BJ (cell line): ENCODE measurements at regions of chr16 and their contacts with region 1.

Region 1: DNA sequence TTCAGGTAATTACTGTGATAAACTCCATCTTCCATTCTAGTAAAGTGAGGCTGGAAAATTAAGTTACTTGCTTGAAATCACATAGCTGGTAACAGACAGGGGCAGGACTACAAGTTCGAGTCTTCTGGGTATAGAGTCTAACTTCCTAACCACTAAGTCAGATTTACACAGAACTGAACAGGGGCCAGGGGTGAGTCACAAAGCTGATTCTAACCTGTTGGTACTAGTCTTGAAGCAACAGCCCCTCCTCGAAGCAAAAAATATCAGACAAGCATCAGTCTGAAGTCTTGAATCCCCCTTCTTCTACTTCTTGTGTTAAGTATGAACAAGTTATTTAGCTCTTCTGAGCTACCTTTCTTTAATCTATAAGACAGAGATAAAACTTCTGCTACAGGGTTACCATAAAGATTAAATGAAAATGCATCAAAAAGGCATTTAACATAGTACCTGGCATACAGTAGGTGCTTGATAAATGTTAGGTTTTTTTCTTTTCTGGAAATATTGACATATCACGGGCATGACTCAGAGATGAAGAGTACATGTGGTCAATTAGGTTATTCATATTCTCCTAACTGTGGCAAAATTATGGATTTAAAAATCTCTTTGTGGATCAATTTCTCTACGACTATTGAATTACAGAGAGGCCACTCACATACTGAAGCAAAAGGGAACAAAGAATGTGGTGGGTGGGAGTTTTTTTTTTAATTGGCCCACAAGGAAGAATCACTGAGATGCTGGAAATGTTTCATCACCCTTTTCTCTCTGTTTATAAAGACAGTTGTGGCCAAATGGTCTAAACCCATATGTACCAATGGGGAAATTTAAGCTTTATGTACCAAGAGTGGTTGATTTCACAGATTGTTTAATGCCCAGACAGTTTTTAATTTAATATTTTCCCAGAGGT is 266.9 kb upstream of the DYNLRB2 start:
- DNase-seq: peak; percentile 39
- H3K4me3 ChIP-seq: no peak overlapping the region
- H3K27me3 ChIP-seq: no peaks in the 10 kb centered on the region
- CTCF ChIP-seq: no peak

Region 2: GRCh38 chr16:80250376-80250775 is 23.5 kb before region 1 on chr16:
- CTCF ChIA-PET with region 1: interaction called, 3 read pairs
- POLR2A ChIA-PET with region 1: interaction called, 31 read pairs
- DNase-seq: no peak
- H3K4me3 ChIP-seq: no peak overlapping the region
- H3K27me3 ChIP-seq: no peaks in the 10 kb centered on the region
- CTCF ChIP-seq: no peak

Region 3: DNA sequence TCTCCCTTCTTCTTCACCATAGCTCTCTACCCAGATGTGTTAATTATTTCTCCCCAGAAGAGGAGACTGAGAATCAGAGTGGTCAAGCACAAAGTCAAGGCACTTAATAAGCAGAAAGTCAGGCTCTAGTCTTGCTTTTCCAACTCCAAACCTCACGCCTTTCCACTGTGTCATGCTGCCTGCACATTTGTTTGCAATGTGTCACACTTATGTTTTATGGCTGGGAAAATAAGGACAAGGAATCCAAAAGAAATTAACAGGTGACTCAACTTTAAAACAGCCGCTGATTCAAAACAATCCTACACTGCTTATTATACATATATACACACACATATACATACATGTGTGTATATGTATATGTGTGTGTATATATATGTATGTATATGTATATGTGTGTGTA is 11.2 kb after region 1 on chr16:
- CTCF ChIA-PET with region 1: no interaction called
- POLR2A ChIA-PET with region 1: no interaction called
- DNase-seq: peak; percentile 87
- H3K4me3 ChIP-seq: no peak overlapping the region
- H3K27me3 ChIP-seq: no peaks in the 10 kb centered on the region
- CTCF ChIP-seq: no peak

Region 4: GRCh38 chr16:80347900-80348299 is 74.0 kb after region 1 on chr16:
- CTCF ChIA-PET with region 1: no interaction called
- POLR2A ChIA-PET with region 1: no interaction called
- DNase-seq: no peak
- H3K4me3 ChIP-seq: no peak overlapping the region
- H3K27me3 ChIP-seq: no peaks in the 10 kb centered on the region
- CTCF ChIP-seq: no peak